Prostate gland (tissue), 2 donors: ENCODE measurements at regions of chr4 and their contacts with region 1.

Region 1: DNA sequence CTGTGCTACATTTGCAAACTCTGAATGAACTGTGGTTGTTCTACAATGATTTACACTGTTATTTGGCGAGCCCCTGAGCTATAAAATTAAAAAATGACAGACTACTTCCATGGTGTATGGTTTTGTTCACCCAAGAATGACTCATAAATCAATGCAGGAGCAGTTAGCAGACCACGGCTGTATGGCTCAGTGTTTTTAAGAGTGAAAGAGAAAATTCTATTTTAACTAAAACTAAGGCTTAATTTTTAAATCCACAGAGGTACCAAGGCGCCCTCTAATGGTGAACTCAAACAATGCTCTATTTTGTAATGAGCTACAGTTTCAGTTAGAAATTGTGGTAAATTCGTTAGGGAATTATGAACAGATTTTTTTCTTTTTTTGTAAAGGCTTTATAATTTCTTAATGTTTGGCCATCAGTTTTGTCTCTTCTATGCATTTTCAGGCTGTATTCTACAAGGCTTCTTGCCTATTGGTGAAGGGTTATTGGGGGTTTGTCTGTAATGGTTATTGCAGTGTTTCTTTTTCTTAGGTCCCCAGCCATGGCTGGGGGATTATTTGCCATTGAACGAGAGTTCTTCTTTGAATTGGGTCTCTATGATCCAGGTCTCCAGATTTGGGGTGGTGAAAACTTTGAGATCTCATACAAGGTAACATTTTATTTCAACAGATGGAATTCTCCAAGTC is 32.5 kb downstream of the HMGB2 start:
- DNase-seq: no peak
- H3K4me3 ChIP-seq: no peak overlapping the region
- H3K27ac ChIP-seq: no peak overlapping the region
- H3K4me1 ChIP-seq: no peaks in the 10 kb centered on the region
- H3K27me3 ChIP-seq: no peaks in the 10 kb centered on the region
- CTCF ChIP-seq: peak; percentile 52 to 64 (median 56)
- POLR2A ChIP-seq: no peak

Region 2: DNA sequence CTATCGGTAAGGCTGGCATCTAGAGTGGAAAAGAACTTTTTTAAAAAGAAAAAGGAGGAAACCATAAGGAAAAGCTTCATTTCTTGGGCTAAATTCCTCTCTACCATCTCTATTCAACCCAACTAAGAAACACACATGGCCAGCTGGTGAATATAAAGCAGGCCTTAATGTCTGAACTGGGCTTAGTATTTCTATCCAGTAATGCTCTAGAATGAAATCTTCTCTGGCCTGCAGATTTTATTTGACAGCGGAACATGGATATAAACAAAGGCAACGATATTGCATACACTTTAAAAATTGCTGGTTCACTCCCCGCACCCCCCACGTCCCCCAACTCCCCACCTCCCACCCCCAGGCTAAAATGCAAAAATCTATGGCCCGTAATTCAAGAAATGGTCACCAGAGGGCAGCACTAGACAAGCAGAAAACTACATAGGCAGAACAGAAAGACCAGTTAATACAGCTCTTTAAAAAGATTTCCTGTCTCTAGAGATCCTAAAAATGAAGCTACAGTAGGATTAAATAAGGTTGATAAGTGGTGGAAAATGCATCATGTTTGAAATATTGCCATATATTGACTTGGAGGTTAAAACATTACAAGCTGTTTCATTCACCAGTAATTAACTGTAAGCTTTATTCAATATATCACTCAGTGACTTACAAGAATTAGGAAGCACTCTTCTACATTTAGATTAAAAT is 288.3 kb before region 1 on chr4:
- intact Hi-C with region 1: loop called (anchors 5 kb)
- DNase-seq: peak; percentile 32
- H3K4me3 ChIP-seq: no peak overlapping the region
- H3K27ac ChIP-seq: no peak overlapping the region
- H3K4me1 ChIP-seq: no peaks in the 10 kb centered on the region
- H3K27me3 ChIP-seq: no peaks in the 10 kb centered on the region
- CTCF ChIP-seq: peak; percentile 24 to 79 (median 62)
- POLR2A ChIP-seq: no peak